ENCODE measurements at regions of chr12 and their contacts with region 1.

Region 1: DNA sequence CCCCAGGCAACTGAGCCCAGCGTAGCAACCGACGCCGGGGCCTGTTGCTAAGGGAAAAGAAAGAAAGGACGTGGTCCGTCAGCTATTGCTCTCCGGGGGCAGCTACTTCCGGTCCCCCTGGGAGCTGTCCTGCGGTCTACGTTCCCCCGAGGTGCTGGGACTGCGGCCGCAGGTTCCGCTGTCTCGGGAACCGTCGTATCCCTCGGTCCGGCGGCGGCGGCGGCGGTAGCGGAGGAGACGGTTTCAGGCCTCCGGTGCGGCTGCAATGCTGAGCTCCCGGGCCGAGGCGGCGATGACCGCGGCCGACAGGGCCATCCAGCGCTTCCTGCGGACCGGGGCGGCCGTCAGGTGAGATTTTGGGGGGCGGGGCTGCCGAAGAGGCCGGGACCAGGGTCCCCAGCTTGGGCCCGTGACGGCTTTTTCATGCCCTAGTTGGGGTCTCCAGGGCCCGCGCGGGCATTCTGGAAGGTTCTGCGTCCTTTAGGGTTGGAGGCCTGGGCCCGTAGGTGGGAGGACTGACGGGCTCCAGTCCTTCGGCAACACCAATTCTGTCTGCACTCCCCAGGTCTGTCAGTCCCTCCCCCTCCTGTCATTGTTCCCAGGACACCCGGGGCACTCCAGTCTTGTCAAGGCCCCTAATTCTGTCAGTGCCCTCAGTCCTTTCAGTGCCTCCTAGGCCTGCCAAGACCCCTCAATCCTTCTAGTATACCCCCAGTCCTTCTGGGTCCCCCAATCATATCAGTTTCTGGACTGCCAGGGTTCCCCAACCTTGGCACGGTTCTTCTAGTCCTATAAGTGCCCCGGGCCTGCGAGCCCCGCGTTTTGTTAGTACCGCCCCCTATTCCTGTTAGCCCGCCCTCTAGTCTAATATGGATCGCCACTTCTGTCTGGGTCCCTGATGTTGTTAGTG is at the start of gene USP30:
- DNase-seq: peak; percentile 87
- H3K4me3 Mint-ChIP-seq: peak within 1 kb of the TSS; percentile 84
- H3K27ac Mint-ChIP-seq: peak within 1 kb of the TSS; percentile 96
- H3K4me1 Mint-ChIP-seq: peaks cover 8% of the 10 kb centered on the region
- H3K27me3 Mint-ChIP-seq: no peaks in the 10 kb centered on the region
- total RNA-seq, gene USP30: 11.0 to 11.5 TPM

Region 2: GRCh38 chr12:108856428-108857157 is 196.1 kb before region 1 on chr12:
- CTCF ChIA-PET with region 1: no interaction called
- intact Hi-C with region 1: loop called (anchors 1 kb)
- DNase-seq: peak; percentile 74
- H3K4me3 Mint-ChIP-seq: peak overlapping the region; percentile 92
- H3K27ac Mint-ChIP-seq: peak overlapping the region; percentile 75
- H3K4me1 Mint-ChIP-seq: peaks cover 40% of the 10 kb centered on the region
- H3K27me3 Mint-ChIP-seq: no peaks in the 10 kb centered on the region

Region 3: GRCh38 chr12:109477185-109477962 is 424.7 kb after region 1 on chr12 and contains the starts of genes KCTD10 and UBE3B:
- CTCF ChIA-PET with region 1: no interaction called
- intact Hi-C with region 1: loop called (anchors 1 kb)
- DNase-seq: peak; percentile 87
- H3K4me3 Mint-ChIP-seq: peak within 1 kb of the TSS; percentile 97
- H3K27ac Mint-ChIP-seq: peak within 1 kb of the TSS; percentile 98
- H3K4me1 Mint-ChIP-seq: peaks cover 49% of the 10 kb centered on the region
- H3K27me3 Mint-ChIP-seq: no peaks in the 10 kb centered on the region
- total RNA-seq, gene KCTD10: 31.1 to 33.4 TPM
- total RNA-seq, gene UBE3B: 26.2 to 26.6 TPM

Measured in activated naive CD4-positive, alpha-beta T cell treated with anti-CD3 and anti-CD28 coated beads for 36 hours (primary cell).